HepG2 (cell line): ENCODE measurements at regions of chr2 and their contacts with region 1.

Region 1: DNA sequence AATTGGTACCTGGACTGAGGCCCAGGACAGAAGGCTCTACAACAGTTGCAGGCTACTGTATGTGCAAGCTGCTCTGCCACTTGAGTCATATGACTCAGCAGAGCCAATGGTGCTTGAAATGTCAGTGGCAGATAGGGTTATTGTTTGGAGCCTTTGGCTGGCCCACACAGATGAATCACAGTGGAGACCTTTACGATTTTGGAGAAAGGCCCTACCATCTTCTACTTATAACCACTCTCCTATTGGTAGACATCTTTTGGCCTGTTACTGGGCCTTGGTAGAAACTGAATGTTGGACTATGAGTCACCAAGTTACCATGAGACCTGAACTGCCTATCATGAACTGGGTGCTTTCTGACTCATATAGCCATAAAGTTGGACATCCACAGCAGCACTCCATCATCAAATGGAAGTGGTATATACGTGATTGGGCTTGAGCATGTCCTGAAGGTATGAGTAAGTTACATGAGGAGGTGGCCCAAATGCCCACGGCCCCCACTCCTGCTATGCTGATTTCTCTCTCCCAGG is 88.9 kb upstream of the NRXN1 start:
- DNase-seq: no peak
- ATAC-seq: no peak
- H3K4me3 ChIP-seq: no peak overlapping the region
- H3K27ac ChIP-seq: no peak overlapping the region
- H3K4me1 ChIP-seq: no peaks in the 10 kb centered on the region
- H3K27me3 ChIP-seq: no peaks in the 10 kb centered on the region
- CTCF ChIP-seq: no peak
- EP300 ChIP-seq: no peak
- POLR2A ChIP-seq: no peak
- RAD21 ChIP-seq: no peak

Region 2: DNA sequence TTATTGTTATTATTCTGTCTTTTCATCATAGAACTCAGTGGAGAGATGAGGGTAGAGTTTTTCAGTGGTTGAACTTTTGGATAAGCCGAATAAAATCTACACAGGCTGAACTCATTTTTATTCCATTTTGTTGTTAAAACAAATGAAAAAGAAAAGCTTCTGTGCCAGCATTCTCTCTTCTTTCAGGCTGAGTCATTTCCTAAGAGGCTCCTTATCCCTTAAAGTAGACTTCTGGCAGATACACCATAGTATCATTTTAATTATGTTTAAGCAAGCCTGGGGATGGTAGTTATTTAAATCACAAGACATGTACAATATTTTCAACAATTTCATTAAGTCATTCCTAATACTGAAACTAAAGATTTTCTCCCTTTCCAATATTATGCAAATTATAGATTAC is 1275.1 kb after region 1 on chr2:
- CTCF ChIA-PET with region 1: no interaction called
- POLR2A ChIA-PET with region 1: no interaction called
- in situ Hi-C with region 1: no loop called
- intact Hi-C with region 1: loop called (anchors 10 kb)
- DNase-seq: no peak
- ATAC-seq: no peak
- H3K4me3 ChIP-seq: no peak overlapping the region
- H3K27ac ChIP-seq: no peak overlapping the region
- H3K4me1 ChIP-seq: no peaks in the 10 kb centered on the region
- H3K27me3 ChIP-seq: no peaks in the 10 kb centered on the region
- CTCF ChIP-seq: no peak
- EP300 ChIP-seq: no peak
- POLR2A ChIP-seq: no peak
- RAD21 ChIP-seq: no peak